Activated CD4-positive, alpha-beta memory T cell treated with anti-CD3 and anti-CD28 coated beads for 36 hours (primary cell): ENCODE measurements at regions of chr6 and their contacts with region 1.

Region 1: GRCh38 chr6:68967549-68968300 is 332.6 kb downstream of the ADGRB3 start:
- DNase-seq: peak; percentile 62
- H3K4me3 Mint-ChIP-seq: no peak overlapping the region
- H3K27ac Mint-ChIP-seq: no peak overlapping the region
- H3K4me1 Mint-ChIP-seq: peaks cover 8% of the 10 kb centered on the region
- H3K27me3 Mint-ChIP-seq: peaks cover 3% of the 10 kb centered on the region

Region 2: DNA sequence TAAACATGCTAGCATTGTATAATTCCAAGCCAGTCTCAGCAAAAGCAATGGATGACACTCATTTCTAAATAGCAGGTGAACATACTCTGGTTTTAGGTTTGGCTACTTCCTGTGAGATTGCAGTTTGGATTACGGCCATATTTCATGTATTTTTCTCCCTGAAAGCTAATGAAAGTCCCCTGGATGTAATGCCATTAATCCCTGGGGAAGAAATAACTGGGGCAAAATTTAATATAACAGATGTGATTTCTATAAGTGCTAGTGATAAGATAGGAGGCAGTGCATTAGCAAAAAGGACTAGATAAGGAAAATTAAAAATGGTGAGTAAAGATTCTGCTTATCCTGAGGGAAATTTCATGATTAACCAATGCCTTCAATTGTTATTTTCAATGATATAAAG is 94.5 kb before region 1 on chr6:
- CTCF ChIA-PET with region 1: no interaction called
- POLR2A ChIA-PET with region 1: no interaction called
- intact Hi-C with region 1: loop called (anchors 5 kb)
- DNase-seq: no peak
- H3K4me3 Mint-ChIP-seq: no peak overlapping the region
- H3K27ac Mint-ChIP-seq: no peak overlapping the region
- H3K4me1 Mint-ChIP-seq: no peaks in the 10 kb centered on the region
- H3K27me3 Mint-ChIP-seq: no peaks in the 10 kb centered on the region